H1 (cell line): ENCODE measurements at regions of chr18 and their contacts with region 1.

Region 1: GRCh38 chr18:22185273-22185672 is 15.9 kb downstream of the GATA6 start:
- DNase-seq: no peak
- H3K4me3 ChIP-seq: no peak overlapping the region
- H3K27ac ChIP-seq: no peak overlapping the region
- H3K4me1 ChIP-seq: no peaks in the 10 kb centered on the region; a peak in 1 of 7 replicates
- H3K27me3 ChIP-seq: peaks cover 0 to 5% (median 2%) of the 10 kb centered on the region in 4 experiments; a peak in 5 of 7 replicates
- CTCF ChIP-seq: peak; percentile 32 to 46 (median 46)
- EP300 ChIP-seq: no peak
- POLR2A ChIP-seq: no peak
- RAD21 ChIP-seq: peak; percentile 40 to 54

Region 2: DNA sequence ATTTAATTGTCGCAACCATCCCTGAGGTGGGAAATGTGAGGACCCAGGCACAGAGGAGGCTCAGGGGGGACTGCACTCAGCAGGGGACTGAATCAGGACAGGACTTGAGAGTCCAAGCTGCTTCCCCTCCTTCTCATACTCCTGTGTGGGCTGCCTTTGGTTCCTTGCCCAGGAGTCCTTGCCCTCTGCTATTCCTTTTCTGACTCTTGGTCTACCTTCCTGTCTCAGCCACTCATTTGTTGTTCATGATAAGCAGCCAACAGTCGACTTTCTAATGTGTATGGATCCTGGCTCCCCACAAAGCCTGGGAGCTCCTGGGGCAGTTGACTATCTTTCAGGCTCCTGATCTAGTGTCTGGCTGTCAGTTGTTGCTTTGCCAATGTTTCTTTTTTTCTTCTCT is 12.4 kb after region 1 on chr18:
- CTCF ChIA-PET with region 1: interaction called, 10 read pairs
- POLR2A ChIA-PET with region 1: no interaction called
- DNase-seq: no peak
- H3K4me3 ChIP-seq: no peak overlapping the region
- H3K27ac ChIP-seq: no peak overlapping the region
- H3K4me1 ChIP-seq: peaks cover 0 to 6% (median 2%) of the 10 kb centered on the region in 4 experiments; a peak in 2 of 7 replicates
- H3K27me3 ChIP-seq: no peaks in the 10 kb centered on the region
- CTCF ChIP-seq: no peak
- EP300 ChIP-seq: no peak
- POLR2A ChIP-seq: no peak
- RAD21 ChIP-seq: no peak